Thyroid gland (tissue), 4 donors: ENCODE measurements at regions of chr5 and their contacts with region 1.

Region 1: DNA sequence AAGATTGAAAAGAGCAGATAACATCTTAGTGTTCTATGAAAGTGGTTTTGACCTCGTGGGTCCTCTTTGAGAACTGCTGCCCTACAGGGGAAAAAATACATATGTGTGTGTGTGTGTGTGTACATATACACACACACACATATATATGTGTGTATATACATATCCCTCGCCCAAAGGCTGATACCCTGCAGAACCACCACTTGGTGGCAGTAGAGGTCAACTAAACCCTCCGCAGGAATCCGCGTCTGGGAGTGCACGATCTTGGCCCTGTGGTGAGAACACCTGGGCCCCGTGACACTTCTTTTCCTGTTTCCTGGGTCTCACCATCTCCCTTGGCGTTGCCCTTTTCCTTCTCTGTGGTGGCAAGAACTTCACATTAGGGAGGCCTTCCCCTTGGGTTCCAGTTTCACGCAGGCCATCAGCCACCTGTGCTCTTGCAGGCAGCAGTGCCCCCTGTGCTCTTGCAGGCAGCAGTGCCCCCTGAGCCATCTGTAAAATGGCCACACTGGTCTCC is 8.2 kb downstream of the IL9 start:
- DNase-seq: peak; percentile 46 to 58
- H3K4me3 ChIP-seq: no peak overlapping the region
- H3K27ac ChIP-seq: no peak overlapping the region
- H3K4me1 ChIP-seq: no peaks in the 10 kb centered on the region
- H3K27me3 ChIP-seq: no peaks in the 10 kb centered on the region
- CTCF ChIP-seq: peak; percentile 38 to 81 (median 72)
- POLR2A ChIP-seq: no peak

Region 2: GRCh38 chr5:135296904-135297816 is 590.2 kb before region 1 on chr5:
- intact Hi-C with region 1: no loop called
- DNase-seq: no peak
- H3K4me3 ChIP-seq: no peak overlapping the region
- H3K27ac ChIP-seq: no peak overlapping the region
- H3K4me1 ChIP-seq: no peaks in the 10 kb centered on the region
- H3K27me3 ChIP-seq: no peaks in the 10 kb centered on the region
- CTCF ChIP-seq: no peak
- POLR2A ChIP-seq: no peak

Region 3: DNA sequence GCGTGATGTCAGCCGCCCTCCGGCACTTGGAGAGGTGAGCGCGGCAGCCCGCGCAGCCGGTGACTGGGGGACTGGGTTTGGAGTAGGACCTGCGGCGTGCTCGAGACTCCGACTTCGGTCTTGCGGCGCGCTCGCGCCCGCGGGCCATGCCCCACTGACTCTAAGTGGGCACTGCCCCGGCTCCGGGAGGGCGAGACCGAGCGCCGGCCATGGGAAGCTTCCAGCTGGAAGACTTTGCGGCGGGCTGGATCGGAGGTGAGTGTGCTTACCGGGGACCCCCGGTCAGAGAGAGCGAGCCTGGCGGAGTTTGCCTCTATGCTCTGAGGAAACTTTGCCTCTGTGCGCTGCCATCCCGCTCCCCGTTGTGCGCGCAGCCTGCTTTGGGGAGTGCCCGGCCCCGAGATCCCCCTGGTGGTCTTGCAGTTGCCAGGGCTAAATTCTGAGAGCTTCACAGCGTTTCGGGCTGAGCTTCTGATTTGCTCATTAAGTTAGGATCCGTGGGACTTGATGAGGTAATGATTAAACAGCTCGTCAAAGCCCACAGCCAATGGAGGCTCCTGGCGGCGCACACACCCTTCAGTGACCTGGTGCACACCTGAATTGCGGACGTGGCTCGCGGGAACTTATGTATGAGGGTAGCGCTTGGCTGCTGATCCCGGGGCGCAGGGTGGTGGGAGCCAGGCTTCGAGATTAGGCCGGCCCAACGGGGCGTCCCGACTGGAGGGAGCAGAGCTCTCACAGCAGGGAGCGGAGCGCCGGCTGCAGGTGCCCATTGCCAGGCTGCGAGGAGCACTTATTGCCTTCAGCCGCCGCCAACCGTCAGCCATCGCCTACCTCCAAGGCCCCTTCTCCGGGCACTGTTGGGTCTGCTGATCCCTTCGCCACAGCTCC is 52.5 kb before region 1 on chr5 and contains the start of gene SLC25A48:
- intact Hi-C with region 1: no loop called
- DNase-seq: peak; percentile 67 to 68
- H3K4me3 ChIP-seq: peak within 1 kb of the TSS in 1 of 3 donors; percentile 27
- H3K27ac ChIP-seq: no peak within 1 kb of the TSS
- H3K4me1 ChIP-seq: peaks cover 8 to 12% of the 10 kb centered on the region in 2 donors
- H3K27me3 ChIP-seq: peaks cover 4% of the 10 kb centered on the region
- CTCF ChIP-seq: peak in 2 of 6 experiments; percentile 25 to 49
- POLR2A ChIP-seq: no peak
- total RNA-seq, gene SLC25A48: 0.33 TPM in 1 of 4 donors, not detected in the others

Region 4: DNA sequence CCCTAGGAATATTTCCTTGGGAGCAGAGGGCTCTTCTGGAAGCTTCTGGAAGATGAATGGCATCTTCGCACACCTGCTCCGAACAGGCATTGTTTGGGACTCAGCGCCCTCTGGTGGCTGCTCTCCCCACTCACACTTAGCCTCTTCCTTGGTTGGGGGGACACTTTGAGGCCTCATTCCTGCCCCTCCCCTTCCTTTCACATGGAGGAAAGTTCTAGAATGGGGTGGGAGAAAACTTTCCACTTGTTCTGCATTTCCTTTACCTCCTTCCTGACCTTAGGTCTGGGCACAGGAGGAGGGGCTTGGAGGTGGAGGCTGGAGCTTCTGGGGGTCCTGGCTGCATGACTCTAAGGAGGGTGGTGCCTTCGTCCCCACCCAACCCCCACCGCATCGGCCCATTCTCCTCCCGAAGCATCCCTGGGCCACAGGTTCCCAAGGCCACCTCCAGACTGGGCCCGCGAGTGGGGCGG is 324.9 kb after region 1 on chr5:
- intact Hi-C with region 1: loop called (anchors 5 kb)
- DNase-seq: peak; percentile 57 to 59
- H3K4me3 ChIP-seq: no peak overlapping the region
- H3K27ac ChIP-seq: no peak overlapping the region
- H3K4me1 ChIP-seq: no peaks in the 10 kb centered on the region
- H3K27me3 ChIP-seq: no peaks in the 10 kb centered on the region
- CTCF ChIP-seq: peak; percentile 71 to 86 (median 80)
- POLR2A ChIP-seq: no peak